Gastrocnemius medialis (tissue), 4 donors: ENCODE measurements at regions of chr12 and their contacts with region 1.

Region 1: DNA sequence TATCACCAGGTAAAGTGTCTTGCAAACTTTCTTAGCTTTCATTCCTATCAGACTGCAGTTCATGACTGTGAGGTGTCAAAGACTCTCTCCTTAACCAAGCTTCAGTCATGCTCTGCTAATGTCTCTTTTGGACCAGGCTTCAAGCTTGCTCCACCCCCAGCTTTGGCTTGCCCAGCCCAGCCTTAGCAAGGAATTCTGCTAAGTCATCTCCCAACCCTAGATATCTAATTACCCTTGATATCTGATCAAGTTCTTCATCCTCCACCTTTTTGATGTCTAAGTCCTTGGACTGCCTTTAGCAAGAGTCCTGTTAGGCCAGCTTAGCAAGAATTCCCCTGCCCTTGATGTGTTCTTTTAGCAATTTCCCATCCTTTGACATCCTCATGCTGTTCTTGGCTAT is 108.9 kb upstream of the FGD4 start:
- DNase-seq: no peak
- ATAC-seq: no peak
- H3K4me3 ChIP-seq: no peak overlapping the region
- H3K27ac ChIP-seq: no peak overlapping the region
- H3K4me1 ChIP-seq: no peaks in the 10 kb centered on the region
- H3K27me3 ChIP-seq: no peaks in the 10 kb centered on the region
- CTCF ChIP-seq: no peak
- POLR2A ChIP-seq: no peak

Region 2: DNA sequence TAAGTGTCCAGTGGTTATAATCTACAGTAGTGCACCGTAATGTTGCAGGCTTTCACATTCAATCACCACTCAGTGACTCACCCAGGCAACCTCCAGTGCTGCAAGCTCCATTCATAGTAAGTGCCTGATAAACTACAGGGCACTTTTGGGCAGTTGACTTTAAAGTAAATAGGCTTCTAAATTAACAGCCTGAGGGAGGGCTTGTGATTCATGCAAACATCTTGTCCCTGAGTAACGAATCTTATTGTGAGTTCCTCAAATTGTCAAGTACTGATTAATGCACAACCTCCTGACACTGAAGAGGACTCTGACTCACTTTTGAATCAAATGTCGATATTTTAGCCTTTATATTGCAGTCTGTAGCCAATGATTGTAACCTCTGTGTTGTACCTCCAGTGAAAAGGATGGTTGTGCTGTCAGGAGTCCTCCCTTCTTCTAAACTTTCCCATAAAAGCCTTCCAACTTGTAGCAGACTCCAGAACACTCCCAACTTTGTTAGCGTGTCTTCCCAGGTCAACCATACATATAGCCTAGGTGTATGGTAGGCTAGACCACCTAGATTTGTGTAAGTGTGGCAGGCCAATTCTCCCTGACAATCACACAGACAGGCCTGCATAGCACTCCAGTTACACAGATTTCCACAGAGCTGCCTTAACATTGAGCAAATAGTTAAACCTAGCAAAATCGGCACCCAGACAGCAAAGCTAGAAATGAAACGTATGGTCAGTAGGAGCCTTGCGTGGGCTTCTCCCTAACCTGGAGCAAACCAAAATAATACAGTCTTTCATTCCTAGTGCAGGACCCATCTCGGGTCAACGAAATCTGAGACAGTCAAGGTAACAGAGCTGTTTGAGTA is 238.6 kb before region 1 on chr12:
- in situ Hi-C with region 1: loop called in 1 of 4 experiments (anchors 10 kb)
- intact Hi-C with region 1: no loop called
- DNase-seq: no peak
- ATAC-seq: no peak
- H3K4me3 ChIP-seq: no peak overlapping the region
- H3K27ac ChIP-seq: no peak overlapping the region
- H3K4me1 ChIP-seq: no peaks in the 10 kb centered on the region
- H3K27me3 ChIP-seq: no peaks in the 10 kb centered on the region
- CTCF ChIP-seq: no peak
- POLR2A ChIP-seq: no peak

Region 3: GRCh38 chr12:32482226-32482625 is 191.8 kb after region 1 on chr12:
- in situ Hi-C with region 1: no loop called
- intact Hi-C with region 1: no loop called
- DNase-seq: no peak
- ATAC-seq: no peak
- H3K4me3 ChIP-seq: no peak overlapping the region
- H3K27ac ChIP-seq: peak overlapping the region; percentile 38 to 69 (median 47)
- H3K4me1 ChIP-seq: peaks cover 33 to 59% of the 10 kb centered on the region in 2 donors
- H3K27me3 ChIP-seq: no peaks in the 10 kb centered on the region
- CTCF ChIP-seq: no peak
- POLR2A ChIP-seq: no peak